Calu3 (cell line): ENCODE measurements at regions of chr2 and their contacts with region 1.

Region 1: GRCh38 chr2:95345566-95346230 is 48.6 kb downstream of the KCNIP3 start:
- DNase-seq: peak; percentile 93
- H3K4me3 Mint-ChIP-seq: peak overlapping the region; percentile 78
- H3K27ac Mint-ChIP-seq: no peak overlapping the region
- H3K4me1 Mint-ChIP-seq: peaks cover 8% of the 10 kb centered on the region
- H3K27me3 Mint-ChIP-seq: peaks cover 30% of the 10 kb centered on the region
- CTCF ChIP-seq: peak; percentile 85

Region 2: GRCh38 chr2:95022309-95023221 is 323.1 kb before region 1 on chr2:
- CTCF ChIA-PET with region 1: no interaction called
- intact Hi-C with region 1: no loop called
- DNase-seq: peak; percentile 83
- H3K4me3 Mint-ChIP-seq: no peak overlapping the region
- H3K27ac Mint-ChIP-seq: no peak overlapping the region
- H3K4me1 Mint-ChIP-seq: peaks cover 31% of the 10 kb centered on the region
- H3K27me3 Mint-ChIP-seq: peaks cover 70% of the 10 kb centered on the region
- CTCF ChIP-seq: peak; percentile 98

Region 3: GRCh38 chr2:95149397-95149984 is 196.2 kb before region 1 on chr2:
- CTCF ChIA-PET with region 1: no interaction called
- intact Hi-C with region 1: no loop called
- DNase-seq: no peak
- H3K4me3 Mint-ChIP-seq: no peak overlapping the region
- H3K27ac Mint-ChIP-seq: no peak overlapping the region
- H3K4me1 Mint-ChIP-seq: no peaks in the 10 kb centered on the region
- H3K27me3 Mint-ChIP-seq: no peaks in the 10 kb centered on the region
- CTCF ChIP-seq: no peak

Region 4: DNA sequence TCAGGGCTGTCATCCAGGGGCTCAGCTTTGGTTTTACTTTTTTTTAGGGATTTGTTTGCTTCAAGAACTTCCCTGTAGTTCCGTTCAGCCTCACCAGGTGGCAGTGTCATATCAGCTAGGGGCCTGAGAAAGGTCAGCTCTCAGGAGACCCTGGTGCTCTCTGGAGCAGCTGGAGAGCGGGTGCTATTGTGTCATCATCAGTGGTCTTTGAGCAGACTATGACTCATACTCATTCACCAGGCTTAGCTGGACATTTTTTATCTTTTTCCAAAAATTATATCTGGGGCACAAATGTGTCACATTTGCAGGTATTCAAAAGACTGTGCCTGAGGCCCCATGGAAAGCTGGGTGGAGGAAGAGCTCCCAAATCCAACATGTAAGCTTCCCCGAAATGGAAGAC is 114.0 kb before region 1 on chr2:
- CTCF ChIA-PET with region 1: interaction called, 10 read pairs
- intact Hi-C with region 1: no loop called
- DNase-seq: peak; percentile 75
- H3K4me3 Mint-ChIP-seq: no peak overlapping the region
- H3K27ac Mint-ChIP-seq: no peak overlapping the region
- H3K4me1 Mint-ChIP-seq: no peaks in the 10 kb centered on the region
- H3K27me3 Mint-ChIP-seq: no peaks in the 10 kb centered on the region
- CTCF ChIP-seq: peak; percentile 88

Region 5: DNA sequence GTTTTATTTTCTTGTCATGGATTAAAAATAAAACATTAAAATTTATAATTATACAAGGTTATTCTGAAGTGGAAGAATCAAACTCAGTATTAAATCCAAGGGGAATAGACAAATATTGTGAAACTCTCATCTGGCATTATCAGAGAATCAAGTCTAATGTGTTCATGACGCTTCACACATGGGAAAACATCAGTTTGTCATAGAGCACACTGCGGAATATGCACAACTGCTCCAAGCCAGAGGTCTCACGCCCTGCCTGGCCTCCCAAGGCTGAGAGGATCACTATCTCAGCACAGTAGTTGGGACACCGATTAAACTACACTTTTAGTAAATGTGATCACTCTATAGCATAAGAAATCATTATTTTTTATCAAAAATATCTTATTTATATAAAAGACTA is 159.5 kb after region 1 on chr2:
- CTCF ChIA-PET with region 1: no interaction called
- intact Hi-C with region 1: no loop called
- DNase-seq: no peak
- H3K4me3 Mint-ChIP-seq: no peak overlapping the region
- H3K27ac Mint-ChIP-seq: no peak overlapping the region
- H3K4me1 Mint-ChIP-seq: no peaks in the 10 kb centered on the region
- H3K27me3 Mint-ChIP-seq: no peaks in the 10 kb centered on the region
- CTCF ChIP-seq: no peak

Region 6: GRCh38 chr2:95526360-95527341 is 181.0 kb after region 1 on chr2:
- CTCF ChIA-PET with region 1: no interaction called
- intact Hi-C with region 1: no loop called
- DNase-seq: peak; percentile 83
- H3K4me3 Mint-ChIP-seq: peak overlapping the region; percentile 94
- H3K27ac Mint-ChIP-seq: peak overlapping the region; percentile 99
- H3K4me1 Mint-ChIP-seq: peaks cover 22% of the 10 kb centered on the region
- H3K27me3 Mint-ChIP-seq: no peaks in the 10 kb centered on the region
- CTCF ChIP-seq: peak; percentile 16